ENCODE measurements at regions of chr1 and their contacts with region 1.

Region 1: DNA sequence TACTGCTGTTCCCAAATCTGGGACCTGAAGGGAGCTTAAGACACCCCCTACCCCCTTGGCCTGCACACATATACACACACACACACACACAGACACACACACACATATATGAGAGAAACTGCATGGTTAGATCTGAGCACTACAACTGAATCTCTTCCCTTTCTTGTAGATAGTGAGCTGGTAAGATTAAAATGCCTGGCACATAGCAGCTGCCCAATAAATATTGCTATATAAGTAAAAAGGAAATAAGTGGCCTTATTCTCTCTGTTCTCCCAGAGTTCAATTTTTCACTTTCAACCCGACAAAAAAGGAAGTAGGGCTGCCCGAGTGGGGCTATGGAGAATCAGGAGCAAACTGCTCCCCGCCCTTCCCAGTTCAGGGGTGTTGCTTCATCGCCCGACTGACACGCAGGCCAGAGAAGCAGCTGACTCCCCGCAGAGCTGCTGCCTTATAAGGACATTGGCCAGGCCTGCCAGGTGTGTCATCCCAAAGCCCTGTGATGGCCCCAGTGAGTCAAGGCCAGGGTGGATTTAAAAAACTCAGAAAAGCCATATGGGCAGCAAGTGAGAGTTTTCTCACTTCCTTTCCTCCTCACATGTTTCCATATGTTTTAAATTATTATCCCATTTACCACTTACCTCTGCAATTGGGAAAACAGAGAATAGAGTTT is 106.5 kb upstream of the SLC44A3 start:
- DNase-seq: peak; percentile 74 to 83
- H3K4me3 ChIP-seq: no peak overlapping the region
- H3K27ac ChIP-seq: no peak overlapping the region
- H3K4me1 ChIP-seq: peaks cover 0 to 11% (median 3%) of the 10 kb centered on the region in 4 experiments; a peak in 2 of 7 replicates
- H3K27me3 ChIP-seq: no peaks in the 10 kb centered on the region
- CTCF ChIP-seq: no peak
- EP300 ChIP-seq: no peak; a peak in 1 of 3 replicates
- POLR2A ChIP-seq: no peak
- RAD21 ChIP-seq: no peak; a peak in 1 of 4 replicates

Region 2: GRCh38 chr1:94617134-94617805 is 96.3 kb before region 1 on chr1:
- CTCF ChIA-PET with region 1: no interaction called
- POLR2A ChIA-PET with region 1: no interaction called
- DNase-seq: no peak
- H3K4me3 ChIP-seq: no peak overlapping the region
- H3K27ac ChIP-seq: no peak overlapping the region
- H3K4me1 ChIP-seq: no peaks in the 10 kb centered on the region; a peak in 1 of 7 replicates
- H3K27me3 ChIP-seq: peaks cover 0 to 3% (median 1%) of the 10 kb centered on the region in 4 experiments; a peak in 3 of 7 replicates
- CTCF ChIP-seq: no peak
- EP300 ChIP-seq: no peak
- POLR2A ChIP-seq: no peak
- RAD21 ChIP-seq: no peak

Region 3: DNA sequence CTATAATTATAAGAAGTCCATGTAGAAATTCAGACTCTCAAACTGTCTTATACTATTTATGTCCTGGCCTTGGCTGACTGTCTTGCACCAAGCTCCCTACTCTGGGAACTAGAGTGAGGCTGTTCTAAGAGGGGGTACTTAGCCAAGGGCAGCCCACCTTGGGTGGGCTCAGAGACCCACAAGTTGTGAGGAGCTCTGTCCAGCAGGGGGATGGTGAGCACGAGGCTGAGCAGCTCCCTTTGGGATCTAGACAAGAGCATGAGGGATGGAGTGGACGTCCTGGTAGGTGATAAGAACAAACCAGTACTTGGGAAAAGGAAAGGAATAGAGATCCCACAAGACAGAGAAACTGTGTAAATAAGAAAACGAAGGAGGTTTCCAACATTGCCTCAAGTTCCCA is 20.6 kb before region 1 on chr1:
- CTCF ChIA-PET with region 1: interaction called, 20 read pairs
- POLR2A ChIA-PET with region 1: no interaction called
- DNase-seq: peak in 1 of 2 experiments; percentile 59
- H3K4me3 ChIP-seq: no peak overlapping the region
- H3K27ac ChIP-seq: no peak overlapping the region
- H3K4me1 ChIP-seq: peaks cover 0 to 21% (median 6%) of the 10 kb centered on the region in 4 experiments; a peak in 6 of 7 replicates
- H3K27me3 ChIP-seq: no peaks in the 10 kb centered on the region
- CTCF ChIP-seq: peak; percentile 62 to 77 (median 75)
- EP300 ChIP-seq: no peak
- POLR2A ChIP-seq: no peak
- RAD21 ChIP-seq: peak; percentile 51 to 69

Region 4: GRCh38 chr1:94698759-94699502 is 14.7 kb before region 1 on chr1:
- CTCF ChIA-PET with region 1: interaction called, 20 read pairs
- POLR2A ChIA-PET with region 1: interaction called, 3 read pairs
- DNase-seq: no peak
- H3K4me3 ChIP-seq: no peak overlapping the region
- H3K27ac ChIP-seq: no peak overlapping the region
- H3K4me1 ChIP-seq: peaks cover 0 to 3% (median 2%) of the 10 kb centered on the region in 4 experiments; a peak in 2 of 7 replicates
- H3K27me3 ChIP-seq: no peaks in the 10 kb centered on the region
- CTCF ChIP-seq: no peak
- EP300 ChIP-seq: no peak
- POLR2A ChIP-seq: no peak
- RAD21 ChIP-seq: peak in 1 of 2 experiments; percentile 3; a peak in 1 of 4 replicates

Region 5: GRCh38 chr1:94723894-94724293 is 10.3 kb after region 1 on chr1:
- CTCF ChIA-PET with region 1: interaction called, 10 read pairs
- POLR2A ChIA-PET with region 1: interaction called, 3 read pairs
- DNase-seq: no peak
- H3K4me3 ChIP-seq: no peak overlapping the region
- H3K27ac ChIP-seq: no peak overlapping the region; the same call in 1 of the 2 replicates
- H3K4me1 ChIP-seq: no peaks in the 10 kb centered on the region
- H3K27me3 ChIP-seq: no peaks in the 10 kb centered on the region
- CTCF ChIP-seq: no peak
- EP300 ChIP-seq: no peak
- POLR2A ChIP-seq: no peak
- RAD21 ChIP-seq: no peak

Measured in H1 (cell line).